ENCODE measurements at regions of chr11 and their contacts with region 1.

Region 1: GRCh38 chr11:18012863-18013781 is at the start of gene SERGEF:
- DNase-seq: peak; percentile 81 to 96 (median 87)
- ATAC-seq: peak; percentile 93
- H3K4me3 ChIP-seq: peak within 1 kb of the TSS; percentile 85
- H3K4me3 Mint-ChIP-seq: peak within 1 kb of the TSS; percentile 93 to 100 (median 98)
- H3K27ac ChIP-seq: peak within 1 kb of the TSS; percentile 84
- H3K27ac Mint-ChIP-seq: peak within 1 kb of the TSS; percentile 89 to 99 (median 99)
- H3K4me1 ChIP-seq: peaks cover 10% of the 10 kb centered on the region in 2 donors
- H3K4me1 Mint-ChIP-seq: peaks cover 17 to 47% (median 37%) of the 10 kb centered on the region in 7 donors
- H3K27me3 ChIP-seq: no peaks in the 10 kb centered on the region
- H3K27me3 Mint-ChIP-seq: no peaks in the 10 kb centered on the region
- total RNA-seq, gene SERGEF: 35.0 to 57.7 (median 52.9) TPM

Region 2: DNA sequence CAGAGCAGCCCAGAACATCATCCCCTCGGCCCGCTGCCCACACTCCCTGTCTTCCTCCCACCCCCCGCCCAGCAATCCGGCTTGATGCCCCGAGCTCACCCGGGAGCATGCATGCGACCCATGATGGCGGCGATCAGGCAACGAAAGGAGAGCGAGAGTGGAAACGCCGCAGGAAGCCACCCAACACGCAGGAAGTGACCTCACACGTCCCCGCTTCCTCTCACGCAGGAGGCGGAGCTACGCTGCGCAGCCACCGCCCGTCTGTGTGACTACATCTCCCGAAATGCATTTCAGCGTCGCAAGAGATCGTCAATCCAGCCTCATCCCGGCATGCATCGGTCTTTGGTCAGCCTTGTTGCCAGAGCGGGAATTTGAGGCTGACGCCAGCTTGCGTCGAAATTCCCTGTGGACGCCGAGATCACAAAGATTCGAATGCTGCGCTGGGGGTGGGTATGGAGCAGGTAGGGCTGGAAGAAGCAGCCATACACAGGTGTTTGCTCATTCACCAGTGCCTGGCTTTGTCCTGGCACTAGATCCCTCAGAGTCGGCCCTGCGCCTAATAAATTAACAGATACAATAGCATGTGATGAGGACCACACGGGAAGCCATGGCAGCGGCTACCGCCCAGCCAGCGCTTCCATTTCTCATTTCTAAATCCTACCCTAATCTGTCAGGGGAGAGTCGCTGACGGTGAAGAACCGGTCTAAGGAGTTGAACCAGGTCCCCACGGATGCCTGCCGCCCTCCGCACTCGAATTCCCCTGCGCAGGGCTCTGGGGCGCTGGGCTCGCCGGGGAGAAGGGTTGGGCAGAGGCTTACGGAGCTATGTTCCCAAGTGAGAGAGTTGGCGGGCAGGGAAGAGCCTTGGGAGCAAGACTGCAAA is 935.4 kb before region 1 on chr11 and contains the start of gene RPS13:
- CTCF ChIA-PET with region 1: no interaction called
- POLR2A ChIA-PET with region 1: no interaction called
- intact Hi-C with region 1: loop called (anchors 1 kb)
- DNase-seq: peak; percentile 76 to 95 (median 93)
- ATAC-seq: peak; percentile 98
- H3K4me3 ChIP-seq: peak within 1 kb of the TSS; percentile 87
- H3K4me3 Mint-ChIP-seq: peak within 1 kb of the TSS; percentile 91 to 99 (median 98)
- H3K27ac ChIP-seq: peak within 1 kb of the TSS; percentile 91
- H3K27ac Mint-ChIP-seq: peak within 1 kb of the TSS; percentile 96 to 99 (median 99)
- H3K4me1 ChIP-seq: peaks cover 12 to 27% of the 10 kb centered on the region in 2 donors
- H3K4me1 Mint-ChIP-seq: peaks cover 25 to 60% (median 37%) of the 10 kb centered on the region in 7 donors
- H3K27me3 ChIP-seq: no peaks in the 10 kb centered on the region
- H3K27me3 Mint-ChIP-seq: no peaks in the 10 kb centered on the region
- total RNA-seq, gene RPS13: 1,062 to 2,591 (median 2,234) TPM

Region 3: DNA sequence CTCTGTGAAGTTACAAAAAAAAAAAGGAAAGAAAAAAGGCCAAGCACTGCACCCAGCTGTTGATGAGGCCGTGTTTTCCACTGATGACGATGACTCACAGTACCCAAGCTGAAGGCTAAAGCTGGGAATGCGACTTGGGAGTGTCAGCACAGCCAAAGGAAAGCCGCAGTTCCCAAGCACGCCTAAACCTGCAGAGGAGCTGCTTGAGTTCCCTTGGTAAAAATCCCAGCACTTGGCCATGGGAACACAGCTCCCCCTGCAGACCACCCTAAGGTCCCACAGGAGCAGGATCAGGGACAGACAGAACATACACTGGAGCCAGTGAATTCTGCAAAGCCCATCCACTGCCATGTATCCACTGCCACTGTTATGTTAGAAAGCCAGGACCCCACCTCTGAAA is 40.1 kb before region 1 on chr11:
- CTCF ChIA-PET with region 1: no interaction called
- POLR2A ChIA-PET with region 1: no interaction called
- intact Hi-C with region 1: no loop called
- DNase-seq: no peak
- ATAC-seq: no peak
- H3K4me3 ChIP-seq: no peak overlapping the region
- H3K4me3 Mint-ChIP-seq: no peak overlapping the region
- H3K27ac ChIP-seq: no peak overlapping the region
- H3K27ac Mint-ChIP-seq: no peak overlapping the region
- H3K4me1 ChIP-seq: no peaks in the 10 kb centered on the region
- H3K4me1 Mint-ChIP-seq: peaks cover 0 to 4% (median 0%) of the 10 kb centered on the region in 7 donors
- H3K27me3 ChIP-seq: no peaks in the 10 kb centered on the region
- H3K27me3 Mint-ChIP-seq: no peaks in the 10 kb centered on the region

Region 4: DNA sequence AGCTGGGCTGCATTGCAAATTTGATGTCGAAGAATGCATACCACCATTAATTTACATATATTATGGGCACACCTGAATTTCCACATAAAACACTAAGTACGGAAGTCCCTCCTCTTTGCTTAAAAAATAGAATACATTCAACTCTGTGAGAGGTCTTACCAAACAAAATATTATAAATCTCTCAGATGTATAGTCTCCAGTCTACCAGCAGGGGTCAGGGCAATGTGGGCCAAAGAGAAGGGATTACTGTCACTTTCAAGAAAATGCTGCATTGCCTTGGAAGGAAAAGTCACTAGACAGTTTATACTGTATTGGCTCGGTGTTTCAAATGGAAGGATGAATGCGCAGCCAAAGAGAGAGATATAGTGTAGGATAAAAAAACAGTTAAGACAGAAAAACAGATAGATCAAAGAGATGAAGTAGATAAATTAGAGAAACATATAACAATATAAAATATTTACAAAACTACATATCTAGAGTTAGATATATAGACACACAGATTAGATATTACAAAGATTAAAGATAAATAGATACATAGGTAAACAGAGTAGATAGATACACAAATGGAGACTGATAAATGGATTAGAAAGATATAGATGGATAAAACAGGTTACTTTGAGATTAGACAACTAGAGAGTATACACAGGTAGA is 21.2 kb before region 1 on chr11:
- CTCF ChIA-PET with region 1: interaction called, 3 read pairs
- POLR2A ChIA-PET with region 1: no interaction called
- intact Hi-C with region 1: loop called in 1 of 2 experiments (anchors 1 kb)
- DNase-seq: peak in 8 of 9 donors; percentile 23 to 65 (median 49)
- ATAC-seq: peak; percentile 82
- H3K4me3 ChIP-seq: no peak overlapping the region
- H3K4me3 Mint-ChIP-seq: no peak overlapping the region
- H3K27ac ChIP-seq: no peak overlapping the region
- H3K27ac Mint-ChIP-seq: no peak overlapping the region
- H3K4me1 ChIP-seq: no peaks in the 10 kb centered on the region
- H3K4me1 Mint-ChIP-seq: peaks cover 0 to 11% (median 3%) of the 10 kb centered on the region in 7 donors
- H3K27me3 ChIP-seq: no peaks in the 10 kb centered on the region
- H3K27me3 Mint-ChIP-seq: no peaks in the 10 kb centered on the region

Region 5: GRCh38 chr11:18698341-18699268 is 685.5 kb after region 1 on chr11 and contains the start of gene TMEM86A:
- CTCF ChIA-PET with region 1: no interaction called
- POLR2A ChIA-PET with region 1: no interaction called
- intact Hi-C with region 1: loop called in 1 of 2 experiments (anchors 10 kb)
- DNase-seq: peak; percentile 81 to 89 (median 87)
- ATAC-seq: peak; percentile 97
- H3K4me3 ChIP-seq: peak within 1 kb of the TSS; percentile 42
- H3K4me3 Mint-ChIP-seq: peak within 1 kb of the TSS; percentile 76 to 89 (median 84)
- H3K27ac ChIP-seq: peak within 1 kb of the TSS; percentile 72
- H3K27ac Mint-ChIP-seq: peak within 1 kb of the TSS; percentile 42 to 95 (median 89)
- H3K4me1 ChIP-seq: peaks cover 6% of the 10 kb centered on the region in 2 donors
- H3K4me1 Mint-ChIP-seq: peaks cover 14 to 27% (median 20%) of the 10 kb centered on the region in 7 donors
- H3K27me3 ChIP-seq: no peaks in the 10 kb centered on the region
- H3K27me3 Mint-ChIP-seq: peaks cover 0 to 39% (median 0%) of the 10 kb centered on the region in 5 donors
- total RNA-seq, gene TMEM86A: 0.53 to 6.5 (median 5.5) TPM

Region 6: DNA sequence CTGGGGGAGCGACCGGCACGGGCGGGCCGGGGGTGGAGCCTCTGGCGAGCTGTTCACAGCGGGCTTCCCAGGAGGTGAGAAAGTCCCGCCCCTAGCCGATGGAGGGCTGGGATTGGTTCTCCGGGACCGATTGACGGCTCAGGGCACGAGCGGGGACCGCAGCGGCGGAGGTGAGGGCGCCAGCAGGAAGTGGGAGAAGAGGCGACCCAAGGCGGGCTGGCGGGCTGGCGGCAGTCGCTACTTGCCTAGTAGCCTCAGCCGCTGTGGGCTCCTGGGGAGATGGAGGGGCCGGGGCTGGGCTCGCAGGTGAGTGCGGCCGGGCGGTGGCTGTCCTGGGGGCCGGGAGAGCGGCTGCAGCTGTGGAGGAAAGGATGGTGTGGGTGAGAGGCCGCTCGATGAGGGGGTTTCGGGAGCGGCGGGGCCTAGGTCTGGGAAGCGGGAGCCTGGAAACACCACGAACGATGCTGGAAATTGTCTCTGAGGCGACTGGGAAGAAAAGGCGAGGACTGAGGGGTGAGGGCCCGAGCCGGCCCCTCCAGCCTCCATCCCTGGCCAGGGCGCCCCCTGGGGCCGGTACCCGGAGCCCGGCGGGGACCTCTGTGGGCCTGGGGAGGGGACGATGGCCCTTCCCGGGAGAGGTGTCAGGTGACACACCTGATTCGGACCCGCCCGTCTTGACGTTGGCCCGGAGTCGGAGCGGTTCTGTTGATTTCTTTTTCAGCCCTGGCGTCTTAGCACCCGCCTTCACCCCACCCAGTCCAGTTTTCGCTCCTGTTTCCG is 1104.0 kb after region 1 on chr11 and contains the start of gene ZDHHC13:
- CTCF ChIA-PET with region 1: no interaction called
- POLR2A ChIA-PET with region 1: no interaction called
- intact Hi-C with region 1: loop called (anchors 2 to 5 kb)
- DNase-seq: peak; percentile 80 to 94 (median 92)
- ATAC-seq: peak; percentile 99
- H3K4me3 ChIP-seq: peak within 1 kb of the TSS; percentile 82
- H3K4me3 Mint-ChIP-seq: peak within 1 kb of the TSS; percentile 89 to 95 (median 93)
- H3K27ac ChIP-seq: peak within 1 kb of the TSS; percentile 73
- H3K27ac Mint-ChIP-seq: peak within 1 kb of the TSS; percentile 72 to 93 (median 89)
- H3K4me1 ChIP-seq: peaks cover 11 to 14% of the 10 kb centered on the region in 2 donors
- H3K4me1 Mint-ChIP-seq: peaks cover 35 to 57% (median 53%) of the 10 kb centered on the region in 7 donors
- H3K27me3 ChIP-seq: no peaks in the 10 kb centered on the region
- H3K27me3 Mint-ChIP-seq: peaks cover 0 to 17% (median 0%) of the 10 kb centered on the region in 5 donors
- total RNA-seq, gene ZDHHC13: 9.3 to 21.3 (median 14.2) TPM

Region 7: GRCh38 chr11:19712281-19713220 is 1699.4 kb after region 1 on chr11 and contains the start of gene NAV2:
- CTCF ChIA-PET with region 1: no interaction called
- POLR2A ChIA-PET with region 1: no interaction called
- intact Hi-C with region 1: loop called (anchors 5 to 10 kb)
- DNase-seq: peak; percentile 43 to 80 (median 62)
- ATAC-seq: peak; percentile 98
- H3K4me3 ChIP-seq: peak within 1 kb of the TSS; percentile 81
- H3K4me3 Mint-ChIP-seq: peak within 1 kb of the TSS; percentile 91 to 98 (median 94)
- H3K27ac ChIP-seq: peak within 1 kb of the TSS; percentile 24
- H3K27ac Mint-ChIP-seq: peak within 1 kb of the TSS; percentile 63 to 87 (median 77)
- H3K4me1 ChIP-seq: peaks cover 14 to 18% of the 10 kb centered on the region in 2 donors
- H3K4me1 Mint-ChIP-seq: peaks cover 6 to 27% (median 24%) of the 10 kb centered on the region in 7 donors
- H3K27me3 ChIP-seq: peaks cover 14% of the 10 kb centered on the region in 2 donors
- H3K27me3 Mint-ChIP-seq: peaks cover 23 to 69% (median 33%) of the 10 kb centered on the region in 5 donors
- total RNA-seq, gene NAV2: 0.24 to 2.2 (median 0.48) TPM